Activated naive CD4-positive, alpha-beta T cell treated with anti-CD3 and anti-CD28 coated beads, Interleukin-2, amount 10 ng/mL, durations not matched to agents 7 days and 5 days (primary cell): ENCODE measurements at regions of chr2 and their contacts with region 1.

Region 1: DNA sequence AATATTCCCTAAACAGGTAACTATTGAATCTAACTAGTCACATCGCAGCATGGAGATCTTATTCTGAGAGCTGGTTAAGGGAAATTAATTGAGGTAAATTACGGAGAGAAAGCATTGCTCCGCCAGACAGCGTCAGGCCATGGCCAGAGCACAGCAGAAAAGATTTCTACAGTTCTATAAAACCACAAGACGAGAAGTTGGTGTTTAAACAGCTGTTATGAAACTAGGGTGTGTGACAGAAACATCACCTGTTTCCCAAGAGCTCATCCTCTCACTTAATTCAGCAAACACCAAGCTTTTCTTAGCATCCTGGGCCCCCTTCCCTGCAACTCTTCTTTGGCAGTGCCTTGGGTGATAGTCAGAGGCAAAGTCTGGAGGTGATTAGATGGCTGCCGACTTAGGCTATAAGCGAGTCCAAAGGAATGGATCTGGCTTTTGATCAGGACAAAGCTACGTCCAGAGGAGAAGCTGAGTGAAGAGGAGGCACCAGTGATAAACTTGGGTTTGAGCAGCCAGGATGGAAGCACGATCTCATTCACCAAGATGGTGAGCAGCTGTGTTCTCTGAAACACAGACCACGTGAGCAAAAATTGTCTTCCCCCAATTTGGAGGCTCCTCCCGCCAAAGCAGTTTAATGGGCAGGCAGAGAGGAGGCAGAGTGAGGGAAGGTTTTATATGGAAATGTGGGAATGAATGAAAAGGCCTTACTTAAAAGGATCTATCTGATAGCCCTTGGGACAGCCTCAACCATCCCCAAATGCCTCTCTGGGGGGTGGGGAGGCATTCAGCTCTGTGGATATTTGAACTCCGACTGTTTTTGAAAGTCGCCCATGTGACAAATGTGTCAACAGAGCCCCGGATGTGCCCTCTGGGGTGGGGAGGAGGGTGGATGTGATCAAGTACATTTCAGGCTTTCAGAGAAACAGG is 57.8 kb downstream of the PKDCC start:
- DNase-seq: peak; percentile 94
- H3K4me3 Mint-ChIP-seq: no peak overlapping the region
- H3K27ac Mint-ChIP-seq: no peak overlapping the region
- H3K4me1 Mint-ChIP-seq: peaks cover 47% of the 10 kb centered on the region
- H3K27me3 Mint-ChIP-seq: no peaks in the 10 kb centered on the region

Region 2: GRCh38 chr2:42124011-42124785 is 18.6 kb after region 1 on chr2:
- CTCF ChIA-PET with region 1: interaction called, 18 read pairs
- DNase-seq: no peak
- H3K4me3 Mint-ChIP-seq: peak overlapping the region; percentile 5
- H3K27ac Mint-ChIP-seq: peak overlapping the region; percentile 82
- H3K4me1 Mint-ChIP-seq: peaks cover 63% of the 10 kb centered on the region
- H3K27me3 Mint-ChIP-seq: peaks cover 3% of the 10 kb centered on the region

Region 3: GRCh38 chr2:42132966-42133641 is 27.5 kb after region 1 on chr2:
- CTCF ChIA-PET with region 1: interaction called, 16 read pairs
- DNase-seq: peak; percentile 95
- H3K4me3 Mint-ChIP-seq: peak overlapping the region; percentile 62
- H3K27ac Mint-ChIP-seq: peak overlapping the region; percentile 95
- H3K4me1 Mint-ChIP-seq: peaks cover 96% of the 10 kb centered on the region
- H3K27me3 Mint-ChIP-seq: no peaks in the 10 kb centered on the region